ENCODE measurements at regions of chr3 and their contacts with region 1.

Region 1: GRCh38 chr3:59575113-59576001 is 525.5 kb upstream of the CFAP20DC start:
- DNase-seq: peak; percentile 48
- ATAC-seq: peak; percentile 97
- H3K4me3 ChIP-seq: no peak overlapping the region
- H3K27ac ChIP-seq: no peak overlapping the region
- H3K4me1 ChIP-seq: peaks cover 0 to 3% of the 10 kb centered on the region in 2 experiments; a peak in 2 of 4 replicates
- H3K27me3 ChIP-seq: peaks cover 5% of the 10 kb centered on the region; the same call in 1 of the 2 replicates
- CTCF ChIP-seq: peak; percentile 77 to 95 (median 93)
- POLR2A ChIP-seq: no peak
- RAD21 ChIP-seq: peak; percentile 89

Region 2: GRCh38 chr3:59771768-59772181 is 196.4 kb after region 1 on chr3:
- CTCF ChIA-PET with region 1: no interaction called
- POLR2A ChIA-PET with region 1: no interaction called
- RAD21 ChIA-PET with region 1: no interaction called
- intact Hi-C with region 1: no loop called
- DNase-seq: no peak
- ATAC-seq: peak; percentile 25; the same call in 1 of the 2 replicates
- H3K4me3 ChIP-seq: no peak overlapping the region
- H3K27ac ChIP-seq: no peak overlapping the region
- H3K4me1 ChIP-seq: peaks cover 3 to 9% of the 10 kb centered on the region in 2 experiments; a peak in 1 of 4 replicates
- H3K27me3 ChIP-seq: no peaks in the 10 kb centered on the region
- CTCF ChIP-seq: no peak
- POLR2A ChIP-seq: no peak
- RAD21 ChIP-seq: no peak

Region 3: DNA sequence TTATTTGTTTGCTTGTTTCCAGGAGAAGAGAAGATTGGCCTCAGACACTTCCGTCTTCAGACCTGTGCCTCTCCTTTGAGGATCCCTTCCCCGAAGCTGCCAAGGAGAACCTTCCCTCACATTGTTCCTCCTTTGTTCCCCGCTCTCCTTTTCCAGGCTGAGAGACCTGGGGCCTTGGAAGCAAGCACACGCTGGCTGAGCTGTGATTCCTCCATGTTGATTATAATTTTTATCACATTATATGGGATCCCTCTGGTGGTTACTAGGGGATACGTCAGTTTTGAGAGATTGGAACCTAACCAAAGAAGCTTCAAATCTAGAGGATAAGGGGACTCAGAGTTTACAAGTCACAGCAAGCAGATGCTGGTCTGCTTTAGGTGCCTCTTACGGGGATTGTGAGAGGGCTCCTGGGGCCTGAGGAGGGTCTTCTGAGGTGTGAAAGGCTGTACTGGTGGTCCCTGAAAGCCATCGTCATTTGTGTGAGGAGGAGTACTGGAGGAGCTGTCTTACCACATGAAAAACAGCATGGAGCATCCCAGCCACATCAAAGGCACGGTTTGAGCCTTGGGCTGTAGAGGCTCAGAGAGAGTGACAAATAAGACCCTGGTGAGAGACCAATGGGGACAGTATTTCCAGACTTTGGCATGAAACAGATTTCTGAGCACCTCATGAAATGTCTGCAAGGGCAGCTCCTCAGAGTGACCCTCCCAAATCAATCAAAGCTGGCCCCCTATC is 234.5 kb after region 1 on chr3:
- CTCF ChIA-PET with region 1: interaction called, 4 read pairs
- POLR2A ChIA-PET with region 1: no interaction called
- RAD21 ChIA-PET with region 1: no interaction called
- intact Hi-C with region 1: loop called (anchors 1 kb)
- DNase-seq: no peak
- ATAC-seq: peak; percentile 67
- H3K4me3 ChIP-seq: no peak overlapping the region
- H3K27ac ChIP-seq: no peak overlapping the region
- H3K4me1 ChIP-seq: peaks cover 0 to 12% of the 10 kb centered on the region in 2 experiments; a peak in 1 of 4 replicates
- H3K27me3 ChIP-seq: no peaks in the 10 kb centered on the region
- CTCF ChIP-seq: peak; percentile 22 to 48 (median 34); a peak in 4 of 6 replicates
- POLR2A ChIP-seq: no peak
- RAD21 ChIP-seq: peak; percentile 51

Region 4: DNA sequence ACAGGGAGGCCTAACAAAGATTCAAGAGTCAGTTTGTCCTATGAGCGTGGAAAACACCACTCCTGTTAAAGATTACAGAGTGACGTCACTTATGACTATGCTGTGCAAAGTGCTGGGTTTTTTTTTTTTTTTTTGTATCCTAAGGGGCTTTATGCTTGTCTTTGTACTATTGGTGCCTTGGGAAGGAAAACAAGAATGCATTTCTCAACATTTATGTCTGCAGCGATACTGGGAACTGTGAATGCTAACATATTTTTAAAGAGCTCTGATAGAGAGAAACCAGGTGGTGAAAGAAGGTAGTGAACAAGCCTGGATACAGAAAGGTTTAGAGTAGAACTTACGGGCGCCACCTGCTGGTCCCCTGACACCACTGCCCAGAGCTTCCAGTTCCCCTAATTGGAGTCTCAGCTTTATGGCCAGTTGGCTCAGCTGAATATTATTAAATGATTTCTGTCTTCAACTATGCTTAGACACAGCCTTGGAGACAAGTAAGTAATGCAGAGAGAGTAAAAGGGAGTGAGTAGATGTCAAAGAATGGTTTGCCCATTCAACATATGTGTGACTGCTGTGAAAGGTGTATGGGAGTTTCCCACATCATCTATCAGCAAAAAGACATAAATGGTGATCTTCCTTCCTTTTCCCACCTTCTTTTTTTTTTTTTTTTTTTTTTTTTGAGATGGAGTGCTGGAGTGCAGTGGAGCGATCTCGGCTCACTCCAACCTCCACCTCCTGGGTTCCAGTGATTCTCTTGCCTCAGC is 282.4 kb after region 1 on chr3:
- CTCF ChIA-PET with region 1: interaction called, 30 read pairs
- POLR2A ChIA-PET with region 1: no interaction called
- RAD21 ChIA-PET with region 1: interaction called, 3 to 4 read pairs
- intact Hi-C with region 1: loop called (anchors 1 kb)
- DNase-seq: peak; percentile 73
- ATAC-seq: peak; percentile 100
- H3K4me3 ChIP-seq: no peak overlapping the region
- H3K27ac ChIP-seq: no peak overlapping the region
- H3K4me1 ChIP-seq: peaks cover 0 to 7% of the 10 kb centered on the region in 2 experiments; a peak in 2 of 4 replicates
- H3K27me3 ChIP-seq: no peaks in the 10 kb centered on the region
- CTCF ChIP-seq: peak; percentile 78 to 95 (median 80)
- POLR2A ChIP-seq: no peak
- RAD21 ChIP-seq: peak; percentile 81

Region 5: DNA sequence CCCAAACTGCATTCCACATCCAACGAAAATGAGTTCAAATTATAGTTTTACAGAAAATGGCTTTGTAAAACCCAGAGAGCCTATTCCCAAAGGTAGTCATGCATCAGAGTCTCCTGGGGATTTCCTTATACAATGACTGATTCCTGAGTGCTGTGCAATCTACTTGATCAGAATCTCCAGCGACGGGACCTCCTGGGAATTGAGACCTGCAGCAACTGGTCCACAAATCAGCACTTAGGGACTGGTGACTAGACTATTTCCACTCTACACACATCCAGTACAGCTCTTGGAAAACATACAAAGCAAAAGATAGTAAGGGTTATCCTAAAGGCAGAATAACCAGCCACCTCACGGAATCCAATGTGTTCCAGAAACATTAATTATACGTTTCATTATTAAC is 345.5 kb after region 1 on chr3:
- CTCF ChIA-PET with region 1: no interaction called
- POLR2A ChIA-PET with region 1: no interaction called
- RAD21 ChIA-PET with region 1: no interaction called
- intact Hi-C with region 1: no loop called
- DNase-seq: no peak
- ATAC-seq: no peak
- H3K4me3 ChIP-seq: no peak overlapping the region
- H3K27ac ChIP-seq: no peak overlapping the region
- H3K4me1 ChIP-seq: no peaks in the 10 kb centered on the region
- H3K27me3 ChIP-seq: peaks cover 9% of the 10 kb centered on the region
- CTCF ChIP-seq: no peak
- POLR2A ChIP-seq: no peak
- RAD21 ChIP-seq: no peak

Region 6: GRCh38 chr3:60742606-60743145 is 1167.3 kb after region 1 on chr3:
- CTCF ChIA-PET with region 1: no interaction called
- POLR2A ChIA-PET with region 1: no interaction called
- RAD21 ChIA-PET with region 1: no interaction called
- intact Hi-C with region 1: loop called (anchors 5 kb)
- DNase-seq: no peak
- ATAC-seq: peak; percentile 72
- H3K4me3 ChIP-seq: no peak overlapping the region
- H3K27ac ChIP-seq: no peak overlapping the region
- H3K4me1 ChIP-seq: no peaks in the 10 kb centered on the region
- H3K27me3 ChIP-seq: no peaks in the 10 kb centered on the region
- CTCF ChIP-seq: peak; percentile 14 to 44 (median 37); a peak in 4 of 6 replicates
- POLR2A ChIP-seq: no peak
- RAD21 ChIP-seq: peak; percentile 34; the same call in 1 of the 2 replicates

Region 7: GRCh38 chr3:61371123-61371522 is 1795.8 kb after region 1 on chr3:
- CTCF ChIA-PET with region 1: no interaction called
- POLR2A ChIA-PET with region 1: no interaction called
- RAD21 ChIA-PET with region 1: no interaction called
- intact Hi-C with region 1: loop called (anchors 10 kb)
- DNase-seq: peak; percentile 35
- ATAC-seq: peak; percentile 78
- H3K4me3 ChIP-seq: no peak overlapping the region
- H3K27ac ChIP-seq: no peak overlapping the region
- H3K4me1 ChIP-seq: no peaks in the 10 kb centered on the region
- H3K27me3 ChIP-seq: peaks cover 15% of the 10 kb centered on the region
- CTCF ChIP-seq: peak; percentile 25 to 80 (median 79); a peak in 4 of 6 replicates
- POLR2A ChIP-seq: no peak
- RAD21 ChIP-seq: peak; percentile 63

Measured in HCT116 (cell line).